GM12878 (cell line): ENCODE measurements at regions of chr2 and their contacts with region 1.

Region 1: DNA sequence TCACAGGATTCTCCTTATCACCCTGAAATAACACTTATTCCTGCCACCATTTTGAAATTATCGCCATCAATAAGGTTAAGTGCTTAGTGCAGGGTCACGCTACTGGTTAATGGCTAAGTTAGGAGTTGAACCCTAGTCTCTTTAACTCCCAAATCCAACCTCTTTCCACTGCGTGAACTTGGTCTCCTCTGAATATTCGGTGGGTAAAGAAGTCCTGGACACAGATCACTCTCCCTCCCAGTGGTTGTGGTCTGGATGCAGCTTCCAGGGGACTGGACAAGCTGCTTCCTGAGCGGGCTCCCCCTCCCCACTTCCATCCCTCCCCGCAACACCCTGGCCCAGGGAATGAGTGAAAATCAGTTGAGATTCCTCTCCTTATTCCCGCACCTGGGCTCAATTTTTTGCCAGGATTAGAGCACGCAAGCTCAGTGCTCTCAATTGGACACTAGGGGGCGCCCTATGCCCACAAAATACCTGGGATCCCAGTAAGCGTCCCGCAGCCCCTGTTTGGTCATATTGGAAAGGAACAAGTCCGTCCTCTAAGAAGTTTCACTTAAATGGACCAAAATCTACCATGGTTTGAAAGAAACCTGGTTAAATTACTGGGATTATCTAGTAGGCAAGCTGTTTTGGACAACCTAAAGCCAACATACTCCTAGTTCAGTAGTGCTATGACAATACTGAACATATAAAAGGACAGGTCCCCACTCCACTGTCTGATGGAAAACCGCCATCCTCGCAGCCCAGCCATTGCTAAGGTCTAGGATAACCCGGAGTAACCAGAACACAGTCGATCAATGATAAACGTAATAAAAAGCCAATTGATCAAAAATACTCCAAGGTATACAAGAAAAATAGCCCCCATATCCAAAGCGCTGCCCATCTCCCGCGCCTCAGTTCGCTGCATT is 40.4 kb downstream of the DHRS9 start:
- DNase-seq: no peak
- ATAC-seq: peak; percentile 95
- H3K4me3 ChIP-seq: no peak overlapping the region
- H3K27ac ChIP-seq: no peak overlapping the region
- H3K4me1 ChIP-seq: 0 out of 2 replicates have a peak, but pooled peaks cover 4% of the 10 kb centered on the region
- H3K27me3 ChIP-seq: no peaks in the 10 kb centered on the region; a peak in 1 of 4 replicates
- CTCF ChIP-seq: peak; percentile 79 to 88 (median 83)
- EP300 ChIP-seq: no peak
- POLR2A ChIP-seq: no peak
- RAD21 ChIP-seq: peak; percentile 81

Region 2: DNA sequence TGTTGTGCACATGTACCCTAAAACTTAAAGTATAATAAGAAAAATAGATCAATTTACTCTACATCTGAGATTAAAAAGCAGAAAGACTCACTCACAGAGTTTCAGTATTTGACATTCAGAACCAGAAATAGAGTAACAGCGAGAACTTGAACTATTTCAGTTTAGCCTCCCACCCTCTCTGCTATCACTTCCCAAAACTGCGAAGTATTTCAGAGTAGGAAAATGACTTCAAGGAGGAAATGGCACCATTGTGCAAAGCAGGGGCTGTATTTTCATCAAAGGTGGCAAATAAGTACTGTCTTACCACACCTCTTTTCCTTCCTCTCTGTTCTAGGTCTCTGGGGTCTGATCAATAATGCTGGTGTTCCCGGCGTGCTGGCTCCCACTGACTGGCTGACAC is 26.8 kb before region 1 on chr2:
- CTCF ChIA-PET with region 1: interaction called, 16 read pairs
- POLR2A ChIA-PET with region 1: no interaction called
- RAD21 ChIA-PET with region 1: interaction called, 3 read pairs
- SMC1A ChIA-PET with region 1: no interaction called
- in situ Hi-C with region 1: no loop called
- intact Hi-C with region 1: no loop called
- DNase-seq: peak; percentile 23
- ATAC-seq: peak; percentile 23; the same call in 2 of the 3 replicates
- H3K4me3 ChIP-seq: no peak overlapping the region
- H3K27ac ChIP-seq: no peak overlapping the region
- H3K4me1 ChIP-seq: peaks cover 8% of the 10 kb centered on the region
- H3K27me3 ChIP-seq: no peaks in the 10 kb centered on the region
- CTCF ChIP-seq: no peak
- EP300 ChIP-seq: no peak
- POLR2A ChIP-seq: no peak
- RAD21 ChIP-seq: no peak

Region 3: GRCh38 chr2:169095621-169096105 is 14.1 kb before region 1 on chr2:
- CTCF ChIA-PET with region 1: interaction called, 48 read pairs
- POLR2A ChIA-PET with region 1: no interaction called
- RAD21 ChIA-PET with region 1: no interaction called
- SMC1A ChIA-PET with region 1: interaction called, 4 read pairs
- in situ Hi-C with region 1: no loop called
- intact Hi-C with region 1: no loop called
- DNase-seq: no peak
- ATAC-seq: no peak
- H3K4me3 ChIP-seq: no peak overlapping the region
- H3K27ac ChIP-seq: no peak overlapping the region
- H3K4me1 ChIP-seq: no peaks in the 10 kb centered on the region
- H3K27me3 ChIP-seq: no peaks in the 10 kb centered on the region; a peak in 1 of 4 replicates
- CTCF ChIP-seq: no peak
- EP300 ChIP-seq: no peak
- POLR2A ChIP-seq: no peak
- RAD21 ChIP-seq: no peak

Region 4: DNA sequence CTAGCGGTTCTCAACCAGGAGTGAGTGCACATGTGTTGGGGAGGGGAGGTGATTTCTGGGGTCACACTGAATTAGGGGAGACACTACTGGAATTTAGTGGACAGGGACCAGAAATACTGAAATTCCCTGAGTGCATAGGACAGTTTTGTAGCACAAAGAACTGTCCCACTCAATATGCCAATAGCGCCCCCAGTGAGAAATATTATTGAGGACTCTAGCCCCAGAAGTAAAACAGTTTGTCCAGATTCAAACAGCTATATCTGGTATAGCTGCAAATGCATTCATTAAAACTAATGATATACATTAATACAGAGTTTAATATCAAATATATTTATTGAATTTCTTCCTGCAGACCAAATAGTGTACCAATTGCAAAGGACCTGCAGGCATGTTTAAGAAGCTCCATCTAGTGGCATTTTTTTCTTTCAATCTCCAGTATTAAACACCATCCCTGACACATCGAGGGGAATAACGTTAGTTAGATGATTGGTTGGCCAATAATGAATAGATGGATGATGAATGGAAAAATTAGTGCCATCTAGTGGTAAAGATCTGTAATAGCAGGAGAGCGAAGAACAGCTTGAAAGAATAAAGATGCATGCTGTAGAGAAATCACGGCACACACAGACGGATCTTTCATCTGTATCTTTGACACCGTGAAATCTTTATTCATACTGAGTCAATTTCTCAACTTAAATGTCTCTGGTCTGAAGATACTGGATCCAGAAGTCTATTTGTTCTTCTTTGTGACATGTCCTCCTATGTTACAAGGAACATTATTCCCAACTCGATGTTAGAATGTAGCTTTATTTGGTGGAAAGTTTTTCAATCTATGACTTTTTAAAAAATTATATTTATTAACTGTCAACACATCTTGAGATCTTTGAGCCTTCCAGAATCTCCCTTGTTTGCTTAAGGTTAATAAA is 22.1 kb after region 1 on chr2:
- CTCF ChIA-PET with region 1: interaction called, 84 read pairs
- POLR2A ChIA-PET with region 1: no interaction called
- RAD21 ChIA-PET with region 1: interaction called, 18 read pairs
- SMC1A ChIA-PET with region 1: interaction called, 25 read pairs
- in situ Hi-C with region 1: no loop called
- intact Hi-C with region 1: loop called (anchors 1 kb)
- DNase-seq: peak; percentile 15
- ATAC-seq: peak; percentile 88
- H3K4me3 ChIP-seq: no peak overlapping the region
- H3K27ac ChIP-seq: no peak overlapping the region
- H3K4me1 ChIP-seq: no peaks in the 10 kb centered on the region
- H3K27me3 ChIP-seq: peaks cover 0 to 2% of the 10 kb centered on the region in 2 experiments; a peak in 1 of 4 replicates
- CTCF ChIP-seq: peak; percentile 63 to 76 (median 72); a peak in 5 of 6 replicates
- EP300 ChIP-seq: no peak
- POLR2A ChIP-seq: no peak
- RAD21 ChIP-seq: peak; percentile 52

Region 5: DNA sequence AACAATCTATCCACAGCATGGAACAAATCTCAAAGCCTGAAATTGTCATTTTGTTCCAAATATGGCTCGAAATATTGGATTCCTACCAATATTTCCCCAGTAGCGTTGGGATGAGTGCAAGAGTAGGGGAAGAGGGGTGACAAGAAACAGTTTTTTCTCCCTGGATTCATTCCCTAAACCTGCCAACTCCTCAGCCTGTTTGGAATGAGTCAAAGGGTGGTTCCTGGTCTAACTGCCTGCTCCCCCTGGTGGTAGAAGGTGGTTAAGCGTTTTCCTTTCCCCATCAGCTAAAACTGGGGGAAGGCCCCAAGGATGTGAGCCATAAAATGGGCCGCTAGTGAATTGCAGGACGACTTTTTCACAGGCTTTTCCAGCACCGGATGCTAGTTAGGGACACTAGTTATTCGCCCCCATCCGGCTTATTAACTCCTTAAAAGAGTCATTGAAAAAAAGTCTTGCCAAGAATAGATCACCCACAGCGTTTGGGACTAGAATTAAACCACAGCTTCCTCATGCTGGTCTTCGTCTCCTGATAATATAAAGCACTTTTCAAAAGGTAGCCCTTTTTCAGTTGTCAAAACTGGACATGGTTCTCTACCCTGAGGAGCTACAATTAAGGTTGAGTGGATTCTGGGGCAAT is 32.1 kb after region 1 on chr2:
- CTCF ChIA-PET with region 1: interaction called, 105 read pairs
- POLR2A ChIA-PET with region 1: interaction called, 3 read pairs
- RAD21 ChIA-PET with region 1: interaction called, 11 read pairs
- SMC1A ChIA-PET with region 1: interaction called, 6 read pairs
- in situ Hi-C with region 1: no loop called
- intact Hi-C with region 1: no loop called
- DNase-seq: peak; percentile 7
- ATAC-seq: peak; percentile 86
- H3K4me3 ChIP-seq: no peak overlapping the region
- H3K27ac ChIP-seq: no peak overlapping the region
- H3K4me1 ChIP-seq: no peaks in the 10 kb centered on the region
- H3K27me3 ChIP-seq: no peaks in the 10 kb centered on the region
- CTCF ChIP-seq: peak; percentile 85 to 94 (median 86)
- EP300 ChIP-seq: no peak
- POLR2A ChIP-seq: no peak
- RAD21 ChIP-seq: peak; percentile 58

Region 6: GRCh38 chr2:169397697-169398096 is 287.9 kb after region 1 on chr2:
- CTCF ChIA-PET with region 1: interaction called, 7 read pairs
- POLR2A ChIA-PET with region 1: no interaction called
- RAD21 ChIA-PET with region 1: no interaction called
- SMC1A ChIA-PET with region 1: interaction called, 7 read pairs
- in situ Hi-C with region 1: no loop called
- intact Hi-C with region 1: loop called (anchors 2 kb)
- DNase-seq: no peak
- ATAC-seq: no peak
- H3K4me3 ChIP-seq: no peak overlapping the region
- H3K27ac ChIP-seq: no peak overlapping the region
- H3K4me1 ChIP-seq: no peaks in the 10 kb centered on the region
- H3K27me3 ChIP-seq: no peaks in the 10 kb centered on the region
- CTCF ChIP-seq: peak in 1 of 3 experiments; percentile 33; a peak in 1 of 6 replicates
- EP300 ChIP-seq: no peak
- POLR2A ChIP-seq: no peak
- RAD21 ChIP-seq: peak; percentile 49

Region 7: DNA sequence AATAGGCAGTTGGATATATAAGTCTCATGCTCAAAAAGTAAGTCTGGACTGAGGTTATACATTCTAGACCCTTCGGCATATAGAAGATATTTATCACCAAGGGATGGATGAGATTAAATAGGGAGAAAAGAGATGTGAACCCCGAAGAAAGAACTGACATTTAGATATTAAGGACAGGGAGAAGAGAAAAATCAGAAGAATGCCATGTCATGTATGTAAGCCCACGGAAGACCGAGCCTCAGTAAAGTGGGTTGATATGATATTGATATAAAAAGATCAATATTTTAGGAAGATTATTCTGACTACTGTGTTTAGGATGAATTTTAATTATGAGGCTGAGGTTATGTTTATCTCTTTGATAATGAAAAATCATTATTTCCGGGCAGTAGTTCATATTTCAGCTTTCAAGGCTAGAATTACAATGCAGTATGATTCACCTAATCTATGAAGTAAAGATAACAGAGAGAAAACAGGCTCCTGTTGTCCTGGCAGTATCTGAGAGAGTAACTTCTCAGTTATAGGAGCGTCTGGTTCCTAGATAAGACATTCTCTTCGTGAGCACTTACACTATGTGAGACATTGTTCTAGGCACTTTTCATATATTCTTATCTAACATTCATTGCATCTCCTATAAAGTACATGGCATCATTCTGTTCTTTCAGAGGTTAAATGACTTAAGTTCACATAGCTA is 800.5 kb after region 1 on chr2:
- CTCF ChIA-PET with region 1: no interaction called
- POLR2A ChIA-PET with region 1: no interaction called
- RAD21 ChIA-PET with region 1: no interaction called
- SMC1A ChIA-PET with region 1: no interaction called
- in situ Hi-C with region 1: loop called (anchors 25 kb)
- intact Hi-C with region 1: no loop called
- DNase-seq: no peak
- ATAC-seq: no peak
- H3K4me3 ChIP-seq: no peak overlapping the region
- H3K27ac ChIP-seq: no peak overlapping the region
- H3K4me1 ChIP-seq: no peaks in the 10 kb centered on the region
- H3K27me3 ChIP-seq: no peaks in the 10 kb centered on the region
- CTCF ChIP-seq: no peak
- EP300 ChIP-seq: no peak
- POLR2A ChIP-seq: no peak
- RAD21 ChIP-seq: no peak